Gastrocnemius medialis (tissue), 4 donors: ENCODE measurements at regions of chr13 and their contacts with region 1.

Region 1: DNA sequence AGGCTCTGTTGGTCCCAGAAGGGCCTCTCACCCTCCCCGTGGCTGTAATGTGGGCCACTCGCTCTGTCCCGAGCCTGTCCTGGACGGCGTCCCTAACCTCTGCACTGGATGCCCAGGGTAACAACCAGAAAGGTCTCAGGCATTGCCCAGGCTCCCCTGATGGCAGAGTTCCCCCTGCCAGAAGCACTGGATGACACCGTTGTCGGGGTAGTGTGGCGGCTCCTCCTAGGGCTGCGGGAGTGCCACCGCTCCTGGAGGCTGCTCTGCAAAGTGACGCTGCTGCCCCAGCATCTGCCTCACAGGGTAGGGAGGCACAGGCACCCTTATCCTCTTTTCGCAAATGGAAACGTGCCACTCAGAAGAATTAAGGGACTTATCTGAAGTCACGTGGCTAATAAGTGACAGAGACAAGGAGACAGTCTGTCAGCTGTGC is 32.0 kb downstream of the MPHOSPH8 start:
- DNase-seq: no peak
- ATAC-seq: no peak
- H3K4me3 ChIP-seq: no peak overlapping the region
- H3K27ac ChIP-seq: no peak overlapping the region
- H3K4me1 ChIP-seq: no peaks in the 10 kb centered on the region
- H3K27me3 ChIP-seq: no peaks in the 10 kb centered on the region
- CTCF ChIP-seq: no peak
- POLR2A ChIP-seq: no peak

Region 2: GRCh38 chr13:19726611-19727010 is 61.2 kb after region 1 on chr13:
- in situ Hi-C with region 1: loop called in 1 of 4 experiments (anchors 10 kb)
- intact Hi-C with region 1: no loop called
- DNase-seq: no peak
- ATAC-seq: no peak
- H3K4me3 ChIP-seq: no peak overlapping the region
- H3K27ac ChIP-seq: no peak overlapping the region
- H3K4me1 ChIP-seq: no peaks in the 10 kb centered on the region
- H3K27me3 ChIP-seq: no peaks in the 10 kb centered on the region
- CTCF ChIP-seq: no peak
- POLR2A ChIP-seq: no peak

Region 3: GRCh38 chr13:19818210-19818842 is 152.9 kb after region 1 on chr13:
- in situ Hi-C with region 1: no loop called
- intact Hi-C with region 1: no loop called
- DNase-seq: no peak
- ATAC-seq: no peak
- H3K4me3 ChIP-seq: no peak overlapping the region
- H3K27ac ChIP-seq: no peak overlapping the region
- H3K4me1 ChIP-seq: no peaks in the 10 kb centered on the region
- H3K27me3 ChIP-seq: no peaks in the 10 kb centered on the region
- CTCF ChIP-seq: peak in 2 of 5 experiments; percentile 26 to 33
- POLR2A ChIP-seq: no peak